ENCODE measurements at regions of chr6 and their contacts with region 1.

Region 1: DNA sequence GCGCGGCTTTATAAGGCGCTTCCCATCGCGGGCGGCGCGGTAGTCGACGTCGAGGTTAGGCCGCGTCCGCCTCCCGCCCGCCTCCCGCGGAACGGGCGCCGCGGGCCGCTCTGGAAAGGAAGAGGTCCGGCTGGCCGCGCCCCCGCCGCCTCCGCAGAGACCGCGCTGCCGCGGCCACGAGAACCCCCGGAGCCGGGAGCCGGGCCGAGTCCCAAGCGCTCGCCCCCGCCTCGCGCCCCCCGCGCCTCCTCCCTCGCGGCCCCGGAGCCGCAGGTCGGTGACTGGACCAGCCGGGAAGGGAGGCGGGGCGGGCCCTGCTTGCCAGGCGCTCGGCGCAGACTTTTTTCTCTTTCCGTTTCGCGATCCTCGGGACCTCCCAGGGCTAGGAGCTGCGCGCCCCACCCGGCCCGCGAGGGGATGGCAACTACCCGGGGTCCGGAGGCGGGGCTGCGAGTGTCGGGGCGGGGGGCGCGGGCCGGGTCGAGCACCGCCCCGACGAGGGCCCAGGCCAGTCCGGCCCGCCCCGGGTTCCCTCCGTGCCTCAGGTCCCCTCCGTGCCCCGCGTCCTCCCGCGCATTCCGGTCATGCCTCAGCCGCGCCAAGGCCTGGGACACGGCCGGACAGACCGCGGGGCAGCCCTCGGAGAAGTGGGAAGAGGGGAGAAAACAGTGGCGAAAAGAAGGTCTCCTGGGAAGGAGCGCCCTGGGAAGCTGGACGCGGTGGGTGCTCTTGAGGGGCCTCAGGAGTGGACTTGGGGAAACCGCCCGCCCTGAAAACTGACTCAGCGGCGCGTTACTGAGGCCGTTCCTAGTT is 423 bp upstream of the PXDC1 start:
- DNase-seq: peak; percentile 87
- ATAC-seq: peak; percentile 75
- H3K4me3 ChIP-seq: peak overlapping the region; percentile 71 to 81 (median 76)
- H3K27ac ChIP-seq: peak overlapping the region; percentile 78
- H3K4me1 ChIP-seq: peaks cover 70% of the 10 kb centered on the region
- H3K27me3 ChIP-seq: no peaks in the 10 kb centered on the region
- CTCF ChIP-seq: peak; percentile 55
- EP300 ChIP-seq: no peak
- POLR2A ChIP-seq: peak in 1 of 2 experiments; percentile 20; a peak in 1 of 4 replicates
- RAD21 ChIP-seq: peak; percentile 69

Region 2: GRCh38 chr6:3522561-3523250 is 229.2 kb before region 1 on chr6:
- CTCF ChIA-PET with region 1: no interaction called
- POLR2A ChIA-PET with region 1: no interaction called
- in situ Hi-C with region 1: no loop called
- intact Hi-C with region 1: no loop called
- DNase-seq: no peak
- ATAC-seq: no peak
- H3K4me3 ChIP-seq: no peak overlapping the region
- H3K27ac ChIP-seq: no peak overlapping the region
- H3K4me1 ChIP-seq: peaks cover 26% of the 10 kb centered on the region
- H3K27me3 ChIP-seq: peaks cover 3 to 63% of the 10 kb centered on the region in 2 experiments; a peak in 4 of 5 replicates
- CTCF ChIP-seq: no peak
- EP300 ChIP-seq: no peak
- POLR2A ChIP-seq: no peak
- RAD21 ChIP-seq: no peak

Region 3: GRCh38 chr6:3721810-3722626 is 29.9 kb before region 1 on chr6:
- CTCF ChIA-PET with region 1: no interaction called
- POLR2A ChIA-PET with region 1: no interaction called
- in situ Hi-C with region 1: no loop called
- intact Hi-C with region 1: no loop called
- DNase-seq: no peak
- ATAC-seq: no peak
- H3K4me3 ChIP-seq: no peak overlapping the region
- H3K27ac ChIP-seq: no peak overlapping the region
- H3K4me1 ChIP-seq: no peaks in the 10 kb centered on the region
- H3K27me3 ChIP-seq: no peaks in the 10 kb centered on the region
- CTCF ChIP-seq: no peak
- EP300 ChIP-seq: no peak
- POLR2A ChIP-seq: no peak
- RAD21 ChIP-seq: no peak

Region 4: DNA sequence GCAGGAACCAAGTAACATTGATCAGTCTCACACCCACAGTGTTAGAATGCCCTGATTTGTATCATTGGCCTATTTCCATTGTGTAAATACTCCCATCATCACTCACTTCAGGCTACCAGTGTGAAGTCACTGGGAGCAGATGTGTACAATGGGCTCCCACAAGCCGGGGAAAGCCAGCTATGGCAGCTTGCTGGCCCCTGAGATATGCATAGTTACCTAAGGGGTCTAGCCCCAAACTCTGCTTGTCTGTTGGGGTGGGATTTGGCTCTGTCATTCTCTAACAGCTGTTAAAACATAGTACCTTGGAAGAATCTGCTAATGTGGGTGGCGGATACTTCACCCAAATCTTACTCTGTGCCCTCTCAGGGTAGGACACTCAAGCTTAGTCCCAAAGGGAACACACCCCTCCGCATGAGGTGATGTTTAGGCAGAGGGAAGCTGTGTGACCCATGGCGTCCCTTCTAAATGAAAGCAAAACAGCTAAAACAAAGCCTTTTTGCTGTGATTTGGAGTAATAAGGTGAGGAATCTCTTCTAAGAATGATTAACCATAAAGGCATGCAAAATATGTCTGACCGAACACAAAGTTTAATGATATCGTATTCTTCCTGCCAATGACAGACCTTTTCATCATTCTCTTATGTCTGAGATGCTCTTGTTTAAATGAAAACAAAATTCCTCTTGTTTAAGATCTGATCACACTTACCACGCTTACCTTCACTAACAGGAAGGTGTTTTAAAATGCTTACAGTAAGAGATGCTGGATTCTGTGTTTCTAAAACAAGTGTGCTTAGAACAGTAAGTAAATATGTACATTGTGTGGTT is 45.5 kb after region 1 on chr6:
- CTCF ChIA-PET with region 1: no interaction called
- POLR2A ChIA-PET with region 1: interaction called, 12 read pairs
- in situ Hi-C with region 1: no loop called
- intact Hi-C with region 1: no loop called
- DNase-seq: peak; percentile 89
- ATAC-seq: peak; percentile 83
- H3K4me3 ChIP-seq: peak overlapping the region; percentile 4 to 25 (median 17); a peak in 5 of 6 replicates
- H3K27ac ChIP-seq: peak overlapping the region; percentile 83
- H3K4me1 ChIP-seq: peaks cover 64% of the 10 kb centered on the region
- H3K27me3 ChIP-seq: no peaks in the 10 kb centered on the region
- CTCF ChIP-seq: no peak
- EP300 ChIP-seq: peak; percentile 57; a peak in 2 of 4 replicates
- POLR2A ChIP-seq: peak in 1 of 2 experiments; percentile 63; a peak in 1 of 4 replicates
- RAD21 ChIP-seq: peak; percentile 28

Region 5: DNA sequence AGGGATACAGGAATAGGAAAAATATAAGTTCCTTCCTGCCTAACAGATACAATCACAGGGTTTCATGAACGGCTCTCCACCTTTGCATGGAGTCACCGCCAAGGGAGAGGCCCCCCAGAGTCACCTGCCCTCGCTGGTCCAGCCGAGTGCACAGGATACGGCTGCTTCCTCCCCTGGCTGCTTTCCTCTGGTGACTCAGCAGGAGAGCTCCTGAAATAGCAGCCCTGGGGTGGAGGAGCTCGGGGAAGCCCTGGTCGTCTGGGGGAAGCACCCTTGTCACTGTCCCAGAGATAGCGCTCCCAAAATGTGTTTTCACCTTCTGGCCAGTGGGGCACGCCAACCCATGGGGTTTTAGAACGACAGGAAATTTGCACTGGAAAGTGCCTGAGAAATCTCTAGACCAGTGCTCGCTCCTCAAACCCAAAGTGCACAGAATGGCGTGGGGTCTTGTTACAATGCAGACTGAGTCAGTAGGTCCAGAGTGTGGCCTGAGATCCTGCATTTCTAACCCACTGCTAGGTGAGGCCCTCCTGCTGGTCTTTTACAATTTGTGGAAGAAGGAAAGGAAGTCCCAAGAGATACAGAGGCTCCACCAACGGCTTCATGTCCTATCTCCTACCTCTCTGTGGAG is 61.3 kb after region 1 on chr6:
- CTCF ChIA-PET with region 1: no interaction called
- POLR2A ChIA-PET with region 1: interaction called, 8 read pairs
- in situ Hi-C with region 1: no loop called
- intact Hi-C with region 1: loop called (anchors 5 kb)
- DNase-seq: peak; percentile 33
- ATAC-seq: peak; percentile 78
- H3K4me3 ChIP-seq: peak overlapping the region in 1 of 3 experiments; percentile 25; a peak in 1 of 6 replicates
- H3K27ac ChIP-seq: peak overlapping the region; percentile 15
- H3K4me1 ChIP-seq: peaks cover 30% of the 10 kb centered on the region
- H3K27me3 ChIP-seq: no peaks in the 10 kb centered on the region
- CTCF ChIP-seq: no peak; the same call in 1 of the 2 replicates
- EP300 ChIP-seq: no peak
- POLR2A ChIP-seq: no peak
- RAD21 ChIP-seq: no peak

Region 6: GRCh38 chr6:3835055-3835731 is 83.3 kb after region 1 on chr6:
- CTCF ChIA-PET with region 1: no interaction called
- POLR2A ChIA-PET with region 1: interaction called, 24 read pairs
- in situ Hi-C with region 1: no loop called
- intact Hi-C with region 1: no loop called
- DNase-seq: peak; percentile 91
- ATAC-seq: peak; percentile 57
- H3K4me3 ChIP-seq: no peak overlapping the region
- H3K27ac ChIP-seq: peak overlapping the region; percentile 67
- H3K4me1 ChIP-seq: peaks cover 55% of the 10 kb centered on the region
- H3K27me3 ChIP-seq: no peaks in the 10 kb centered on the region
- CTCF ChIP-seq: peak; percentile 75
- EP300 ChIP-seq: peak; percentile 88 to 91
- POLR2A ChIP-seq: no peak
- RAD21 ChIP-seq: peak; percentile 85

Region 7: DNA sequence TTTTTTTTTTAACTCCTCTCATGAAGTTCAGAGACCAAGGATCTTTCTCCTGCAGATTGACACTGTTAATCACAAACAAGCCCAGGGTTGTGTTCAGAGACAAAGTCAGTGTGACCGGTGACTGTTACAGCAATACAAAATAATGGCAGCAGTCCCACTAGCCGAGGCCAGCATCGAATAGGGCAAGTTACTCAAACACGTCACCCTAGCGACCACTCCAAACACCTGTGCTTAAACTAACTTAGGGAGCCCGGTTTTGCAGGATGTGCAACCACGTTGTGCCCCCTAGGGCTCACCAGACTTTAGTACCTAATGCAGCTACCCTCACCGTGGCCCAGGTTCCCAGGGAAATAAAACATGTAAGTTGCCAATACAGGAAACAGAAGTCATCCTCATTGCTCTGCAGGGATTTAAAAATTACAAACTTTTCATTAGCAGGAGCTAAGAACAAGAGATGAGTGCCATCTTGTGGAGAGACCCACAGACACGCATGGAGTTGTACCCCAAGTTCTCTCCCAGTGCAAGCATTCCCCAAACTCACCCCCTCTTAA is 135.3 kb after region 1 on chr6:
- CTCF ChIA-PET with region 1: interaction called, 9 read pairs
- POLR2A ChIA-PET with region 1: interaction called, 6 read pairs
- in situ Hi-C with region 1: loop called (anchors 5 kb)
- intact Hi-C with region 1: loop called (anchors 1 kb)
- DNase-seq: peak; percentile 57
- ATAC-seq: peak; percentile 79
- H3K4me3 ChIP-seq: no peak overlapping the region
- H3K27ac ChIP-seq: peak overlapping the region; percentile 7
- H3K4me1 ChIP-seq: peaks cover 78% of the 10 kb centered on the region
- H3K27me3 ChIP-seq: no peaks in the 10 kb centered on the region
- CTCF ChIP-seq: peak; percentile 79
- EP300 ChIP-seq: no peak
- POLR2A ChIP-seq: no peak
- RAD21 ChIP-seq: no peak; the same call in 1 of the 2 replicates

Region 8: DNA sequence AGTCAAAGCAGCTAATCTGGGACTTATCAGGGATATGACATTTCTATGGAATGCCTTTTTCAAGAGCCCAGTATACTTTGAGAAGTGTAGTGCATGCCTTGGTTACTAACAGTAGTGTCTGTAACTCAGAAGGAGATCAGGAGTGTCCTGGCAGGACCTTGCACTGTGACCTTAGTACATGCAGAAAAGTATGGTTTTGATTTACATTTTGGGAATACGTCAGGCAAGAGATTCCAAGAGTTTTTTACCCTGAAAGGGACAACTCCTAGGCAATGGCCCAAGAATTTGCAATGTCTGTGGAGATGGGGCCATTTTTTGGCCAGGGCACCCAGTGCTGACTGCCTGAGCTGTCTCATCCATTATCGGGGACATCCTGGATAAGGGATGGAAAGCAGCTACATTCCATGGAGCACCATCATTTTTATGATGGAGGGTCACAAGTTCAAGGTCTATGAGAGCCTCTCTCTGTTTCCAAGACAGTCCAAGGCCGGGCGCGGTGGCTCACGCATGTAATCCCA is 177.4 kb after region 1 on chr6:
- CTCF ChIA-PET with region 1: interaction called, 12 read pairs
- POLR2A ChIA-PET with region 1: interaction called, 19 read pairs
- in situ Hi-C with region 1: no loop called
- intact Hi-C with region 1: no loop called
- DNase-seq: no peak
- ATAC-seq: no peak
- H3K4me3 ChIP-seq: no peak overlapping the region
- H3K27ac ChIP-seq: no peak overlapping the region
- H3K4me1 ChIP-seq: peaks cover 16% of the 10 kb centered on the region
- H3K27me3 ChIP-seq: no peaks in the 10 kb centered on the region
- CTCF ChIP-seq: no peak
- EP300 ChIP-seq: no peak
- POLR2A ChIP-seq: no peak
- RAD21 ChIP-seq: no peak

Region 9: GRCh38 chr6:3960754-3961361 is 208.9 kb after region 1 on chr6:
- CTCF ChIA-PET with region 1: no interaction called
- POLR2A ChIA-PET with region 1: no interaction called
- in situ Hi-C with region 1: no loop called
- intact Hi-C with region 1: no loop called
- DNase-seq: no peak
- ATAC-seq: no peak
- H3K4me3 ChIP-seq: no peak overlapping the region
- H3K27ac ChIP-seq: no peak overlapping the region
- H3K4me1 ChIP-seq: peaks cover 27% of the 10 kb centered on the region
- H3K27me3 ChIP-seq: peaks cover 0 to 30% of the 10 kb centered on the region in 2 experiments; a peak in 3 of 5 replicates
- CTCF ChIP-seq: no peak
- EP300 ChIP-seq: no peak
- POLR2A ChIP-seq: no peak
- RAD21 ChIP-seq: no peak

Region 10: DNA sequence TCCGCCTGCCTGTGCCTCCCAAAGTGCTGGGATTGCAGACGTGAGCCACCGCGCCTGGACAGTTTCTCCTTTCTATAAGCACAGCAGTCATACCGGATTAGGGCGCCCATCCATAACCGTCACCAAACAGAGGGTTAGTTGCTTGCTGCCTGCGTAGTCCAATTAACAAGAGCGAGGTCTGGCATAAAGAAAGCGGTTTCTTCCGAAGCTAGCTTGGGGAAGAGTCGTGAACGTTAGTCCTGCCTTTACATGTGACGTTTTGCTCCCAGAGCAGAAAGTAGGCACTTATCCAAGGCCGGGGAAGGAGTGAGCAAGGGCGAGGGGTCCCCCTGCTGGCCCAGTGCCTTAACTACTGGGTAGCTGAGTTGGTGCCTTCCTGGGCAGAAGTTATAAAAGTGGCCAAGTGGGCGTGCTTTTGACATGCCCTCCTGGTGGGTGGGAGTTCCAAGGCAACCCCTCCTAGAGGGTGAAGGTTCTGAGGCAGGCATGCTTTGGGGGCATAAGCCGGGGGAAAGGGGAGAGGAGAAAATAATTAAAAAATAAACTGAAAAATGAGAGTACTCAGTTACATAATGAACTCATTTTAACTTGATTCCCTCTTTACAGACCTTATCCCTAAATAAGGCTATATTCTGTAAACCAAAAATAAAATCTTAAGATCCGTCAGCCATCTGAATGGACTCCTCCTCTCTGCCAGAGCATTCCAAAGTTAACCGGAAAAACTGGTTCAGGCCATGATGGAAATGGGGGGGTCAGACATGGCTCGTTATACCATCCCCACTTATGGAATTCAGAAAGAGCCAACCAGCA is 239.0 kb after region 1 on chr6:
- CTCF ChIA-PET with region 1: interaction called, 17 read pairs
- POLR2A ChIA-PET with region 1: no interaction called
- in situ Hi-C with region 1: no loop called
- intact Hi-C with region 1: no loop called
- DNase-seq: peak; percentile 77
- ATAC-seq: peak; percentile 98
- H3K4me3 ChIP-seq: peak overlapping the region in 1 of 3 experiments; percentile 52; a peak in 2 of 6 replicates
- H3K27ac ChIP-seq: no peak overlapping the region
- H3K4me1 ChIP-seq: peaks cover 20% of the 10 kb centered on the region
- H3K27me3 ChIP-seq: no peaks in the 10 kb centered on the region
- CTCF ChIP-seq: peak; percentile 99
- EP300 ChIP-seq: no peak
- POLR2A ChIP-seq: no peak
- RAD21 ChIP-seq: peak; percentile 96

Region 11: DNA sequence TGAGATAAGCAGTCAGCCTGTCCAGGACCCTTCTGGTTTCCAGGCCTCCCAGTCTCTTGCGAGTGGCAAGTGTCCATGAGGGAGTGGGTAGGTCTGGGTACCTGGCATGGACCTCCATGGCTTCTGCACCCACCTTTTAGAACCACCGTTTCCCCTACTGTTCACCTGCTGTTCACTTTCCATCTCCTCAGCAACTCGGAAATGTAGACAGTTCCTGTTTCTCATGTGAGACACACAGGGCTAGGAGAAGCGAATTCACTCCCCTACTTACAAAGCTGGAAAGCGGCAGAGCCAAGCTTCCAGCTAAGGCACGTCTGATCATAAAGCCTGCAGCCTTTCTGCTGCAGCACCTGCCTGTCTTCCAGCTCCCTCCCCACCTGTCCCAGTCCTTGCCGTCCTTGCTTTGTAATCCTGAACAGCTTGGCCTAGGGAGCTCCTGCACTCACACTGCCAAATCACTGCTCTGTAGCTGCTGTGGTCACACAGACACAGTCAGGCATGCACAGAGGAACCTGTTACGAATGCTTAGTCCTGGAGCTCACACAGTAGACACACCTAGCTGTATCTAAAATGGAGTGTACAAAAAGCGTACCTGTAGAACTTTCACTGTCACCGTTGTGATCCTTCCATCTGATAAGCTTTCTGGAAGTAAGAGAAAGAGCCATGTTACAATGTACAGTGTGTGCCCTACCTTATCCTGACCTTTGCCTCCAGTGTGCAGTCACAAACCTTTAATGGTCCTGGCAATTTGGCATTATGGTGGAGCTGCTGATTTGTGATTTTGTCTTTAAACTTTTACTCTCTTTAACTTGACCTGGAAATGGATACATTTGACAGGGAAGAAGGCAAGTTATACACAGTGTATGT is 1960.6 kb after region 1 on chr6:
- CTCF ChIA-PET with region 1: no interaction called
- POLR2A ChIA-PET with region 1: no interaction called
- in situ Hi-C with region 1: no loop called
- intact Hi-C with region 1: no loop called
- DNase-seq: no peak
- ATAC-seq: peak; percentile 61
- H3K4me3 ChIP-seq: no peak overlapping the region
- H3K27ac ChIP-seq: no peak overlapping the region
- H3K4me1 ChIP-seq: peaks cover 25% of the 10 kb centered on the region
- H3K27me3 ChIP-seq: no peaks in the 10 kb centered on the region
- CTCF ChIP-seq: no peak
- EP300 ChIP-seq: no peak
- POLR2A ChIP-seq: no peak
- RAD21 ChIP-seq: no peak

Measured in HepG2 (cell line).